ENCODE measurements at regions of chr18 and their contacts with region 1.

Region 1: GRCh38 chr18:3671181-3671580 is 221.2 kb downstream of the TGIF1 start:
- DNase-seq: no peak
- H3K4me3 ChIP-seq: no peak overlapping the region
- H3K27ac ChIP-seq: peak overlapping the region; percentile 69
- H3K4me1 ChIP-seq: peaks cover 47% of the 10 kb centered on the region
- H3K27me3 ChIP-seq: no peaks in the 10 kb centered on the region
- CTCF ChIP-seq: no peak

Region 2: DNA sequence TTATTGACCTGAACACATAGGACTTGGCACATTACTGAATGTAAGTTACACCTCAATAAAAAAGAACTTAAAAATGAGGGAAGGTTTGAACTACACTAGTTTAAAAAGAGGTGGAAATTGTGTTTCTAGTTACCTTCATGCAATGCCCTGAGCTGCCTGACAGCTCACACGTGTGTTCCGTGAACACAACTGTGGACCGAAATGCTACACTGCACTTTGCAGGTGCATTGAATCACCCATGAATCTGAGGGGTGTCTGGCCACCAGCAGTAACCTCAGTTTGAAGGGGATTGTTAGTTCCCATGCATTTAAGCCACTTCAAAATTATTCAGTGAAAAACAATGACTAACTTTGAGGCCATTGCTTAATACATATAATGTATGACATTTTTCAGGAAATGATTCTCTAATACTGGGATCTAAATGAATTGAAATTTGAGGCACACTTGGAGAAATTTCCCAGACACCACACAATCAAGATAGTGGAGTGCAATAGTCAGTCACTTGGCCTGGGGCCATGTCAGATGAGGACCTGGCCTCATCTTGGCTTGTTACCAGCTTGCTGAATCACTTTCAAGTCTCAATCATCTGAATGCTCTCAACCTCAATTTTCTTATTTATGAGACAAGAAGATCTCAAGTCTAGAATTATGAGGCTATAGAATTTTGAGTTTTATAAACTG is 349.9 kb before region 1 on chr18:
- CTCF ChIA-PET with region 1: no interaction called
- POLR2A ChIA-PET with region 1: no interaction called
- intact Hi-C with region 1: no loop called
- DNase-seq: peak; percentile 80
- H3K4me3 ChIP-seq: no peak overlapping the region
- H3K27ac ChIP-seq: no peak overlapping the region
- H3K4me1 ChIP-seq: peaks cover 16% of the 10 kb centered on the region
- H3K27me3 ChIP-seq: no peaks in the 10 kb centered on the region
- CTCF ChIP-seq: no peak

Region 3: DNA sequence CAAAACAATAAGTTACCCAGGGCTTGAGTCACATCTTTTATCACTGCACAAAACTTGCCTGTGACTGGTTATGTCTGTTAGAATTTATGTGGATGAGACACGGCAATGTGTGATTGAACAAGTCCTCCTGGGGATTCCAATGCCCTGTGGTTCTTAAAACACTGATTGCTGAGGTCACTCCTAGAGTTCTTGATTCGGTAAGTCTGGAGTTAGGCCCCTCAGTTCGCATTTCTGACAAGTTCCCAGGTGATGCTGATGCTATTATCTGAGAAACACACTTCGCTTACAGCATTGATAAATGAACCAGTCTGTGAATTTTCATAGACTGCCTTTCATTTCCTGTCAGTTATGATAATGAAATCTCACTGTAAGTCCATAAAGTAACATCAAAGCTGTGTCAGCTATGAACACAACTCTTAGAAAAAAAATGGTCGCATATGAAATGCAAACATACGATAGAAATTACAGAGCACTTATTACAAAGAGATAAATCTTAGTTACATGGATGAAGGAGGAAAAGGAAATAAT is 570.0 kb after region 1 on chr18:
- CTCF ChIA-PET with region 1: no interaction called
- POLR2A ChIA-PET with region 1: no interaction called
- intact Hi-C with region 1: no loop called
- DNase-seq: no peak
- H3K4me3 ChIP-seq: no peak overlapping the region
- H3K27ac ChIP-seq: no peak overlapping the region
- H3K4me1 ChIP-seq: peaks cover 12% of the 10 kb centered on the region
- H3K27me3 ChIP-seq: no peaks in the 10 kb centered on the region
- CTCF ChIP-seq: no peak

Region 4: GRCh38 chr18:5137261-5137660 is 1466.1 kb after region 1 on chr18:
- CTCF ChIA-PET with region 1: no interaction called
- POLR2A ChIA-PET with region 1: interaction called, 20 read pairs
- intact Hi-C with region 1: no loop called
- DNase-seq: no peak
- H3K4me3 ChIP-seq: no peak overlapping the region
- H3K27ac ChIP-seq: no peak overlapping the region
- H3K4me1 ChIP-seq: no peaks in the 10 kb centered on the region
- H3K27me3 ChIP-seq: peaks cover 87% of the 10 kb centered on the region
- CTCF ChIP-seq: no peak